CD14-positive monocyte (primary cell): ENCODE measurements at regions of chr11 and their contacts with region 1.

Region 1: DNA sequence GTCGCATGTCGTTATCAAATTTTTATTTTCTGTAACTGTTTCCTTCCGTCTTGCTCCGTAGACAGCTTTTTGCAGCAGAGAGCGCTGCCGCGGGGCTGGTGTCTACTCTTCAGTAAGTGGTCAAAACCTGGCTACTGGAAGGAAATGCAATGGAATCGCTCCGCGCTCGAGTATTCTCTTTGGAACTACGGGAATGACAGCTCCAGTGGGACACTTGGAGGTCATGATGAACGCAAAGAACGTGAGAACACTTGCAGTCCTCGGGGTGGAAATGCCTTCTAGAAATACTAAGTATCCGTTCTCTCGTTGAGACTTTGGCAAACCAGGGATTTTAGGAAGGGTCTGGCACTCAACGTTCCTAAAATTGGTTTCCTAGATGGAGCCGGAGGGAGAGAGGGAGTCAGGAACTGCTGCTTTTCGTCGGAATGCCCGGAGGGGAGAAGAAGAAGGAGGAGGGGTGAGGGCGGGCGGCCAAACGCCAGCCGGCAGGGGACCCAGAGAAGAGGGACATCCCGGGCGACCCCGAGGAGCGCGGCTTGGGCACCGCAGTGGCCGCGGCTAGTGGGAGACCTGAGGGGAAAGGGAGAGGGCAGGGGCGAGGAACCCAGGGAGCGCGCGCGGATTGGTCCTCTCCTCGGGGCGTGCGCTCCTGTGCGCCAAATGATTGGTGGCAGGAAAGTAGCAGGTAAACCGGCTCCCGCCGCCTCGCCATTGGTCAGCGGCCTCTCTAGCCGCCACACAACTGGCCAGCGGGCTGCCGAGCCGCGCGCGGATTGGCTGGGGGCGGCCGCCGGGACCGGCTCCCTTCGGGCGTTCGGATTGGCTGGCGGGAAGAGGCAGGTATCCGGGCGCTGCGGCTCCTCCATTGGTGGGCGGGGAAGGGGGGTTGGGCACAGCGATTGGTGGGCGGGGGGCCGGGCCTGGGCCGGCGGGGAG is 490 bp upstream of the BMAL1 start:
- DNase-seq: peak; percentile 95 to 98 (median 97)
- H3K4me3 ChIP-seq: peak overlapping the region; percentile 62 to 85 (median 80)
- H3K4me3 Mint-ChIP-seq: peak overlapping the region; percentile 98 to 99
- H3K27ac ChIP-seq: peak overlapping the region in 1 of 2 donors; percentile 86
- H3K27ac Mint-ChIP-seq: peak overlapping the region; percentile 31 to 85 (median 68)
- H3K4me1 ChIP-seq: peaks cover 28 to 41% of the 10 kb centered on the region in 2 donors
- H3K4me1 Mint-ChIP-seq: peaks cover 44% of the 10 kb centered on the region
- H3K27me3 ChIP-seq: peaks cover 33 to 53% of the 10 kb centered on the region in 2 donors
- H3K27me3 Mint-ChIP-seq: peaks cover 56 to 68% (median 64%) of the 10 kb centered on the region in 3 donors
- CTCF ChIP-seq: no peak

Region 2: DNA sequence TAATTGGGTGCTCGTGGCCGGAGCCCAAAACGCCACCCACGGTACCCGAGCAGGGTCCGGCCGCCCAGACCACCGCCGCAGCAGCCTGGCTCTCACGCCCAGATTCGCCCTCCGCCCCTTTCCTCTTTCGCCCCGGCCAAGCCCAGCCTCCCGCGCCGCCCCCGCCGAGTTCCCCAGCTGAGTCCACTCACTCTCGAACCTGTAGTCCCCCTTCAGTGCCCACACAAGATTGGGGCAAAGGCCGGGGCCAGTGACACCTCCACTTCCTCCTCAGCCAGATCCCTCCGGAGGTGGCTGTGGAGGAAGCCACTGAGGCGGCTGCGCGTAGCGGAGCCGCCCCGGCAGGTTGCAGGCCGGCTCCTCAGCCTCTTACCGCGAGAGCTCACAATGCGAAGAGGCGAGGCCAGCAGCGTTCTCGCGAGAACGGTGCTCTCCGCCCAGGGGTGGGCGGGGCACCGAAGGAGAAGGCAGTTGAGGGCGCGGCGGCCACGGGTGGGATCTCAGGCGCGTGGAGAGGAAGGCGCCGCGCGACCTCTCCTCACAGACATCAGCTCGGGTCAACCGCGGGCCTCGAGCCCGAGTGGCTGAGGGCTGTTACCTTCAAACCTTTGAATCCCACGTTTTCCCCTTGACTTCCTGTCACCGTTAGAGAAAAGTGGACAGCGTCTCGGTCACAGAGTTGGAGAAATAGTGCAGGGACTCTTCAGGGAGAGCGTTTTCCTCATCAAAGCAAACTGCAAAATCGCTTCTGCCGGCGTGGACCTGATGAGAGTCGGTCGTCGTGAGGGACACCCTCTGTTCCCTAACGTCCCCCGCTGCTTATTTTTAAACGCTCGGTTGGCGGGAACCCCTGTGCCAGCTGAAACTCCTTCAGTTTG is 186.0 kb after region 1 on chr11 and contains the start of gene BTBD10:
- intact Hi-C with region 1: loop called (anchors 10 kb)
- DNase-seq: peak; percentile 93 to 96 (median 94)
- H3K4me3 ChIP-seq: peak within 1 kb of the TSS; percentile 82 to 93 (median 90)
- H3K4me3 Mint-ChIP-seq: peak within 1 kb of the TSS; percentile 97 to 99
- H3K27ac ChIP-seq: peak within 1 kb of the TSS; percentile 76 to 87
- H3K27ac Mint-ChIP-seq: peak within 1 kb of the TSS; percentile 91 to 98 (median 96)
- H3K4me1 ChIP-seq: peaks cover 22 to 29% of the 10 kb centered on the region in 2 donors
- H3K4me1 Mint-ChIP-seq: peaks cover 37% of the 10 kb centered on the region
- H3K27me3 ChIP-seq: no peaks in the 10 kb centered on the region
- H3K27me3 Mint-ChIP-seq: peaks cover 0 to 2% (median under 1%) of the 10 kb centered on the region in 3 donors
- CTCF ChIP-seq: no peak
- polyA plus RNA-seq, gene BTBD10: 9.6 to 19.8 (median 13.8) TPM